ENCODE measurements at regions of chr3 and their contacts with region 1.

Region 1: DNA sequence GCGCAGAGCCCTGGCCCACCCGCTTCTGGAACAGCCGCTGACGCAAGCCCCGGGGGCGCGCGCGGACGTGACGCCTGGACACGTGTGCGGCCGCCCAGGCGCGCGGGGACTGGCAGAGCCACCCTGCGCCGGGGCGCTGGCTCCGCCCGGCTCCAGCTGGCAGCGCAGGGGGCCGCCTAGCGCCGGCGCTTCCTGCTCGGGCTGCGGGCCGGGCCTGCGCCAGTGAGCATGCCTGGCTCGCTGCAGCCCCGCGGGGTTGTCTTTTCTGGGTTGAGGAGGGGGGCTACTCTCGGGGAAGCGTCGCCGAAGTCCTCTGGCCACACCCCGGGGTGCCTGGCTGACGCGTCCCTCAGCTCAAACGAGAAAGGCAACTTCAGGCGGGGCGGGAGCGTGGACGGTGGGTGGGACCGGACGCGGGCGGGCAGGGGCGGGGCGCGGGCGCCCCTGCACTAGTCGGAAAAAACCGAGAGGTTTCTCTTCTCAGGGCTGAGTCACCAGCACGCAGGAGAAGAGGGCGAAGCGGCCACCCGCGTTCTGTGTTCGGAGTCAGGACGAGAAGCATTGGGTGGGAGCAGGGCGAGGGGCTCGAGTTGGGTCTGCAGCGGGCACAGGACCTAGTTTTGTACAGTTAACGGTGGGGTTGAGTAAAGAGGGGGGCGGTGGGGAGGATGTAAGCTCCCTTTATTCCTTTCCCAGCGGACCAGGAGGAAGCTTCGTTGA is at the start of gene SIAH2:
- DNase-seq: peak; percentile 95
- ATAC-seq: peak; percentile 74
- H3K4me3 ChIP-seq: peak within 1 kb of the TSS; percentile 74 to 91 (median 86)
- H3K4me3 Mint-ChIP-seq: peak within 1 kb of the TSS; percentile 99
- H3K27ac ChIP-seq: peak within 1 kb of the TSS; percentile 95 to 96
- H3K27ac Mint-ChIP-seq: peak within 1 kb of the TSS; percentile 99
- H3K4me1 ChIP-seq: peaks cover 51 to 56% of the 10 kb centered on the region in 2 donors
- H3K4me1 Mint-ChIP-seq: peaks cover 63% of the 10 kb centered on the region
- H3K27me3 ChIP-seq: peaks cover 0 to 2% (median 0%) of the 10 kb centered on the region in 4 experiments
- H3K27me3 Mint-ChIP-seq: peaks cover 4% of the 10 kb centered on the region
- CTCF ChIP-seq: no peak
- total RNA-seq, gene SIAH2: 22.3 and 22.5 TPM in 2 replicates

Region 2: DNA sequence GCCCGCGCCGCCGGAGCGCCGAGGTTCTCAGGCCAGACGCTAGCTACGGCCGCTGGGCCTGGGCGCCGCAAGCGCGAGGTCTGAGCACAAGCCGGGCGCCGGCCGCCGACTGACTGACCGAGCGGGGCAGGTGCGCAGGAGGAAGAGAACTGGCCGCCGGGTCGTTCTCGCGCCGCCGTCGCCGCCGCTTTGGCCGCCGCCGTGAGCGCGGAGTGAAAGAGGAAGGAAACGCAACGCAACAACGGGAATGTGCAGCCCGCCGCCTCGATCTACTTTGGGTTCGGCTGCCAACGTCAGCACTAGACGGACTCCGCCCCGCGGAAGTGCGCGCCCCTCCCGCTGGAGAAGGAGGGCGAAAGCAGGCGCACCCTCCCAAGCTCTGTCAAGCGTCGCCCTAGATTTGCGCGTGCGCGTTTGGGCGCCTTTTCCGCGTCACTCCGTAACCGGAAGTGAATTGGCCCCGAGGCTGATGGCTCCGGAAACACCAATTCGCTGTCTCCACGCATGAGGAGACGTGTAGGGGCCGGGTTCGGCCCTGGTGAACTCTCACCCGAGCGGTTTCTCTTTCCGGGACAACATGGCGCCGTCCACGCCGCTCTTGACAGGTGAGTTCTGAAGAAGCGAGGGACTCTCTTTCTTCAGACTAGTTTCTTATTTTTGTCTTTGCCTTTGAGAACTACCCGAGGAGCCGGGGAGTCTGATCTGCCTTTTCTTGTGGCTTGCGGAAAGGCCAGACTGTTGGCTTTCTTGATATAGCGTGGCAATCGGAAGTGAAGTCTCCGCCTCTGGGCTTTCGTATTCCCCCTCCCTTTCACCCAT is 216.8 kb before region 1 on chr3 and contains the starts of genes EIF2A and SERP1:
- CTCF ChIA-PET with region 1: interaction called, 3 read pairs
- POLR2A ChIA-PET with region 1: interaction called, 12 read pairs
- intact Hi-C with region 1: loop called (anchors 1 kb)
- DNase-seq: peak; percentile 100
- ATAC-seq: peak; percentile 90
- H3K4me3 ChIP-seq: peak within 1 kb of the TSS; percentile 67 to 96 (median 86)
- H3K4me3 Mint-ChIP-seq: peak within 1 kb of the TSS; percentile 93
- H3K27ac ChIP-seq: peak within 1 kb of the TSS; percentile 87 to 98
- H3K27ac Mint-ChIP-seq: peak within 1 kb of the TSS; percentile 99
- H3K4me1 ChIP-seq: peaks cover 11 to 21% of the 10 kb centered on the region in 2 donors
- H3K4me1 Mint-ChIP-seq: peaks cover 47% of the 10 kb centered on the region
- H3K27me3 ChIP-seq: no peaks in the 10 kb centered on the region
- H3K27me3 Mint-ChIP-seq: no peaks in the 10 kb centered on the region
- CTCF ChIP-seq: no peak
- total RNA-seq, gene EIF2A: 78.8 and 83.1 TPM in 2 replicates
- total RNA-seq, gene SERP1: 78.0 and 84.6 TPM in 2 replicates

Region 3: DNA sequence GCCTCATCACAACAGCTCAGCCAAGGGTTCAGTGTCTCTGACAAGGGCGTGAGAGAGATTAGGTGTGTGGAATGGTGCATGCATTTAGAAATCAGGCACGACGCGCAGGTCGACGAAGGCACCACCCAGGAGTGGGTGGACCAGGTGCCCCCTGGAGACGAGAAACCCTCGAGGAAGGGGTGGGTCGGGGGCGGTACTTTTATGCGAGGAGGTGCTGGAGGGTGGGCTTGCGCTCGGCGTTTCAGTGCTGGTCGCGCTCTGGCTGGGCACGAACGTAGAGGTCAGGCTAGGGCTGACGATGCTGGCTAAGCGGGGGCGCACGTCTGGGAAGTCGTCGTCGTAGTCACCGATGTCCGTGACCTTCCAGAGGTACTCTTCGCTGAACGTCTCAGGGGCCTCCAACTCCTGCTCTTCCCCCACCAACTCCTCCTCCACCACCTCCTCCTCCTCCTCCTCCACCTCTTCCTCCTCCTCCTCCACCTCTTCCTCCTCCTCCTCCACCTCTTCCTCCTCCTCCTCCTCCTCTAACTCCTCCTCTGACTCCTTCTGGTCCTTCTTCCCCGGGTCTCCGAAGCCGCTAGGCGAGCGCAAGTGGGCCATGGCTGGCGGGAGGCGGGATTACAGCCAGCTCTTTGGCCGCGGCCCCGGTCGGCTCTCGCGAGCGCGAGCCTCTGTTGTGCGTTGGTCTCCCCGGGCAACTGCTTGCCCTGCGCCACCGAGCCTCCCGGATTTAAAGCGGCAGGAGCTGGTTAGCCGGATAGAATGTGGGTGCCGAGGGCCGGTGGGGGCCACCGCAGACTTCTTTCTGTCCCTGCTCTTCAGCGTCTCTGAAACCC is 59.8 kb before region 1 on chr3 and contains the start of gene ERICH6:
- CTCF ChIA-PET with region 1: interaction called, 4 read pairs
- POLR2A ChIA-PET with region 1: interaction called, 15 read pairs
- intact Hi-C with region 1: loop called (anchors 1 kb)
- DNase-seq: peak; percentile 93
- ATAC-seq: peak; percentile 92
- H3K4me3 ChIP-seq: peak within 1 kb of the TSS; percentile 68 to 88 (median 76)
- H3K4me3 Mint-ChIP-seq: peak within 1 kb of the TSS; percentile 98
- H3K27ac ChIP-seq: peak within 1 kb of the TSS; percentile 84 to 97
- H3K27ac Mint-ChIP-seq: peak within 1 kb of the TSS; percentile 97
- H3K4me1 ChIP-seq: peaks cover 0 to 13% of the 10 kb centered on the region in 2 donors
- H3K4me1 Mint-ChIP-seq: peaks cover 16% of the 10 kb centered on the region
- H3K27me3 ChIP-seq: no peaks in the 10 kb centered on the region
- H3K27me3 Mint-ChIP-seq: no peaks in the 10 kb centered on the region
- CTCF ChIP-seq: no peak
- total RNA-seq, gene ERICH6: 0.44 TPM in 1 of 2 replicates, not detected in the other

Region 4: DNA sequence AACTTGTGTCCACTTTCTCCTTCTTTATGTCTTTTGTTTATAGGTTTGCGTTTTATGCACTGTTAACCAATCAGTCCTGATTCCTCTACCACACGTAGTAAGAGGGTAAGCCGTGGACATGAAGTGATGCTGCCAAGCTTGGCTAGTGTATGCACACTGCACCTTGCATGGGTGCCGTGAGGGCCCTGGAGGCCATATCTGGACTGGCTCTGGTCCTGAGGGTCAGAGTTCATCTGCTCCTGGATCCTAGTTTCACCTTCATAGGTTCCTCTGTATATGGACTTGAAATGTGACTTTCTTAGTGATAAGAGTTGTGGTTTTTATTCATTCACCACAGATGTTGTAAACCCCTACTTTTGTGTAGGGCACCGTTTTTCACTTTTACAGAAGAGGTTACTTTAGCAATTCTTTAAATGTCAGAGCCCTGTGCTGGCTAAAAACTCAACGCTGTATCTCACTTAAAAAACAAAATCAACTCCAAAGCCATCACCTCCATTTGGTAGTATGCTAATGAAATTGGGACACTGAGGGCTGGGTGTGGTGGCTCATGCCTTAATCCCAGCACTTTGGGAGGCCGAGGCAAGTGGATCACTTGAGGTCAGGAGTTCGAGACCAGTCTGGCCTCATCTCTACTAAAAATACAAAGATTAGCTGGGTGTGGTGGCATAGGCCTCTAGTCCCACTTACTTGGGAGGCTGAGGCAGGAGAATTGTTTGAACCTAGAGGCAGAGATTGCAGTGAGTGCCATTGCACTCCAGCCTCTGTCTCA is 23.2 kb before region 1 on chr3:
- CTCF ChIA-PET with region 1: interaction called, 9 read pairs
- POLR2A ChIA-PET with region 1: no interaction called
- intact Hi-C with region 1: loop called (anchors 1 kb)
- DNase-seq: no peak
- ATAC-seq: peak; percentile 34
- H3K4me3 ChIP-seq: peak overlapping the region in 1 of 5 experiments; percentile 30
- H3K4me3 Mint-ChIP-seq: peak overlapping the region; percentile 77
- H3K27ac ChIP-seq: peak overlapping the region; percentile 12 to 21
- H3K27ac Mint-ChIP-seq: peak overlapping the region; percentile 84
- H3K4me1 ChIP-seq: peaks cover 55 to 61% of the 10 kb centered on the region in 2 donors
- H3K4me1 Mint-ChIP-seq: peaks cover 79% of the 10 kb centered on the region
- H3K27me3 ChIP-seq: no peaks in the 10 kb centered on the region
- H3K27me3 Mint-ChIP-seq: no peaks in the 10 kb centered on the region
- CTCF ChIP-seq: no peak

Region 5: DNA sequence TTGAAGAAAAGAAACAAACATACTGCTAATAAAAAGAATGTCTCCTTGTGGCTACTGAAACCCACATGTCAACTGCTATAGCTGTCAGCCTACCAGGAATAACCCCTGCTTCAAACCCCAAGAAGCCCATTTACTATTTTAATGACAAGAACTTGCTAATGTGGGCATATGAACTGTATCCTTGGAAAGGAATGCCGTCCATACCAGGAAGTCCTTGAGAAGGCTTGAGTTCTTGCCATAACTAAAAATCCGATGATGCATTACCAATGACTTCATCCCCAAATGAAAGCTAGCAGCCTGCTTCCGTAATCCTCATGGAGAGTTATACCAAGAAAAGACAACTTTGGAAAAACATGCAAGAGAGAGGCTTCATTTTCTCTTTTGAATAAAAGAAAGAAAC is 107.1 kb after region 1 on chr3:
- CTCF ChIA-PET with region 1: interaction called, 5 read pairs
- POLR2A ChIA-PET with region 1: no interaction called
- intact Hi-C with region 1: loop called (anchors 1 kb)
- DNase-seq: no peak
- ATAC-seq: no peak
- H3K4me3 ChIP-seq: no peak overlapping the region
- H3K4me3 Mint-ChIP-seq: no peak overlapping the region
- H3K27ac ChIP-seq: no peak overlapping the region
- H3K27ac Mint-ChIP-seq: no peak overlapping the region
- H3K4me1 ChIP-seq: no peaks in the 10 kb centered on the region
- H3K4me1 Mint-ChIP-seq: peaks cover under 1% of the 10 kb centered on the region
- H3K27me3 ChIP-seq: no peaks in the 10 kb centered on the region
- H3K27me3 Mint-ChIP-seq: peaks cover 17% of the 10 kb centered on the region
- CTCF ChIP-seq: no peak

Region 6: DNA sequence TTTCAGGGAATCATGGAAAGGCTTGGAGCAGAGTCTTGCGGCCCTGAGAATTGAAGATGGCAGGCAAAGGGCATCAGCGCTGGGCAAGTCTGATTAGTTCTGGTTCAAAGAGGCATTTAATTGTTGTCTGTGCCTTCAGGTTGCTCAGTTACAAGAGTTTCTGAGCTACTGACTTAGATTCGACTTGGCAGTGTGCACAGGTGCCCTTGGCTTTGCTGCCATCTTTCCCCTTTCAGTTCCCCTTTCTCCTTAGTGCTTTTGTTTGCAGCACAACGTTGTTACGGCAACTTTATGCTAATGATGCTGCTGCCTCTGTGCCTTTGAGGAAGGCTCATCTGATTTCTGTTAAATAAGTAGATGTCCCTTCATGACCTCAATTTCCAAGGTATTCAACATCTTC is 502.6 kb after region 1 on chr3:
- CTCF ChIA-PET with region 1: no interaction called
- POLR2A ChIA-PET with region 1: no interaction called
- intact Hi-C with region 1: loop called (anchors 1 kb)
- DNase-seq: peak; percentile 95
- ATAC-seq: peak; percentile 89
- H3K4me3 ChIP-seq: peak overlapping the region in 1 of 5 experiments; percentile 34
- H3K4me3 Mint-ChIP-seq: peak overlapping the region; percentile 66
- H3K27ac ChIP-seq: peak overlapping the region; percentile 97 to 99
- H3K27ac Mint-ChIP-seq: peak overlapping the region; percentile 99
- H3K4me1 ChIP-seq: peaks cover 44 to 53% of the 10 kb centered on the region in 2 donors
- H3K4me1 Mint-ChIP-seq: peaks cover 66% of the 10 kb centered on the region
- H3K27me3 ChIP-seq: no peaks in the 10 kb centered on the region
- H3K27me3 Mint-ChIP-seq: no peaks in the 10 kb centered on the region
- CTCF ChIP-seq: no peak

Region 7: GRCh38 chr3:152205097-152205593 is 1441.9 kb after region 1 on chr3:
- CTCF ChIA-PET with region 1: no interaction called
- POLR2A ChIA-PET with region 1: no interaction called
- intact Hi-C with region 1: loop called (anchors 5 kb)
- DNase-seq: peak; percentile 87
- ATAC-seq: peak; percentile 82
- H3K4me3 ChIP-seq: peak overlapping the region; percentile 66 to 97 (median 72)
- H3K4me3 Mint-ChIP-seq: peak overlapping the region; percentile 95
- H3K27ac ChIP-seq: peak overlapping the region; percentile 83 to 92
- H3K27ac Mint-ChIP-seq: peak overlapping the region; percentile 96
- H3K4me1 ChIP-seq: peaks cover 21 to 40% of the 10 kb centered on the region in 2 donors
- H3K4me1 Mint-ChIP-seq: peaks cover 46% of the 10 kb centered on the region
- H3K27me3 ChIP-seq: no peaks in the 10 kb centered on the region
- H3K27me3 Mint-ChIP-seq: no peaks in the 10 kb centered on the region
- CTCF ChIP-seq: no peak

Measured in B cell (primary cell).